HepG2 (cell line): ENCODE measurements at regions of chr2 and their contacts with region 1.

Region 1: DNA sequence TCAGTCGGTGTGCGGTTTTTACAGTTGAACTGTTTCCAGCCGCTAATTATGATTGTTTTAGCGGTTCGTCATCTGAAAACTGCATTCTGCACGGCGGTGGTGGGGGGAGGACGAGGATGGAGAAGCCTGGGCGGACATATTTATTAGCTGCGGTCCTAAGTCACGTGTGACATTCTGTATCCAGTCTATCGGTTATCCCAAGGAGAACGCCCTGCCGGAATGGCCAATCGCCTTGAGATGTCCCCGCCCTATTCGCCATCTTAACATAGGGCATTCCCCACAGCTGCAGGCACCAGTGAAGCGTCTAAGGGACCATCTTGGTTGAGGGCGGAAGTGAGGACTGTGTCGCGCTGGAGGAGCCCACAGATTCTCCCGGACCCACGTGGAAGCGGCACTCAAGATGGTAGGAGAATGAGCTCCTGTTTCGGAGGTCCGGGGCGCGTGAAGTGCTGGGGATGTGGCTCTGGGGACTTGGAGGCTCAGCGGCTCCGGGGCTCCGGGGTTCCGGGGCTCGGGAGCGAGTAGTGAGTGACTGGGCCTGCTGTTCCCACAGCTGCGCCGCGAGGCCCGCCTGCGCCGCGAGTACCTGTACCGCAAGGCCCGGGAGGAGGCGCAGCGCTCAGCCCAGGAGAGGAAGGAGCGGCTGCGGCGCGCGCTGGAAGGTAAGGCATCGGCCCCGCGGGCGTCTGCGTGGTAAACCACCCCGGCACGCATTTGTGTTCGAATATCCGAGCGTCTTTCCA is at the start of gene IMP4:
- DNase-seq: peak; percentile 100
- ATAC-seq: peak; percentile 93
- H3K4me3 ChIP-seq: peak within 1 kb of the TSS; percentile 78 to 99 (median 94)
- H3K27ac ChIP-seq: peak within 1 kb of the TSS; percentile 80
- H3K4me1 ChIP-seq: peaks cover 28% of the 10 kb centered on the region
- H3K27me3 ChIP-seq: peaks cover 0 to 4% of the 10 kb centered on the region in 2 experiments; a peak in 1 of 5 replicates
- CTCF ChIP-seq: peak; percentile 77
- EP300 ChIP-seq: 0 out of 4 replicates have a peak, but pooled peaks of 1 of the 2 experiments have one; percentile 24
- POLR2A ChIP-seq: peak; percentile 72 to 88
- RAD21 ChIP-seq: peak; percentile 84
- total RNA-seq, gene IMP4: 142 and 153 TPM in 2 replicates

Region 2: DNA sequence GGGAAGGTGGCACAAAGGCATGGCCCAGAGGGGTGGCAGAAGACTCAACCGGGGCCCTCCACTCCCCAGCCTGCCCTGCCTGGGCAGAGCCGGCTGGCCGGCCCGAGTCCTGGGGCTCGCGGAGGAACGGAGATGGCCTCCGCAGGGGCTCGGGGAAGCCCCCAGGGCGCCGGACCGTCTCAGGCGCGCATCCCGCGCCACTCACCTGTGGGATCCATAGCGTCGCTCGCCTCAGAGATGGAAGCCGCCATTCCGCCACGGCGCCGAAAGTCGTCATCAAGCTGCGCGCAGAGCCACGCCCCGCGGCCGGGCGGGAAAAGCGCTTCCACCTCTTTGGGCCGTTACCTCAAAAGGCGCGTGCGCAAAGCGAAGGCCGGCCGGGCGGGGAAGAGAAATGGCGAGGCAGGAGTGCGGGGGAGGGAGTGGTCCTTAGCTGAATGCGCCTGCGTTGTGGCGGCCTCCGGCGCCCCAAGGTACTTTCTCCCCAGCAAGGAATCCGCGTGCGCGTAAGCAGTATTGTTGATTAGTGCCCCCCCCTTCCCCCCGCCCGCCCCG is 161.3 kb before region 1 on chr2 and contains the start of gene SMPD4:
- CTCF ChIA-PET with region 1: no interaction called
- POLR2A ChIA-PET with region 1: interaction called, 32 read pairs
- in situ Hi-C with region 1: no loop called
- intact Hi-C with region 1: loop called (anchors 1 kb)
- DNase-seq: peak; percentile 96
- ATAC-seq: peak; percentile 73
- H3K4me3 ChIP-seq: peak within 1 kb of the TSS; percentile 97 to 99 (median 99)
- H3K27ac ChIP-seq: peak within 1 kb of the TSS; percentile 92
- H3K4me1 ChIP-seq: peaks cover 35% of the 10 kb centered on the region
- H3K27me3 ChIP-seq: peaks cover 0 to 4% of the 10 kb centered on the region in 2 experiments; a peak in 2 of 5 replicates
- CTCF ChIP-seq: no peak
- EP300 ChIP-seq: peak; percentile 23 to 50; a peak in 1 of 4 replicates
- POLR2A ChIP-seq: peak; percentile 68 to 71
- RAD21 ChIP-seq: no peak
- total RNA-seq, gene SMPD4: 70.5 and 72.5 TPM in 2 replicates

Region 3: DNA sequence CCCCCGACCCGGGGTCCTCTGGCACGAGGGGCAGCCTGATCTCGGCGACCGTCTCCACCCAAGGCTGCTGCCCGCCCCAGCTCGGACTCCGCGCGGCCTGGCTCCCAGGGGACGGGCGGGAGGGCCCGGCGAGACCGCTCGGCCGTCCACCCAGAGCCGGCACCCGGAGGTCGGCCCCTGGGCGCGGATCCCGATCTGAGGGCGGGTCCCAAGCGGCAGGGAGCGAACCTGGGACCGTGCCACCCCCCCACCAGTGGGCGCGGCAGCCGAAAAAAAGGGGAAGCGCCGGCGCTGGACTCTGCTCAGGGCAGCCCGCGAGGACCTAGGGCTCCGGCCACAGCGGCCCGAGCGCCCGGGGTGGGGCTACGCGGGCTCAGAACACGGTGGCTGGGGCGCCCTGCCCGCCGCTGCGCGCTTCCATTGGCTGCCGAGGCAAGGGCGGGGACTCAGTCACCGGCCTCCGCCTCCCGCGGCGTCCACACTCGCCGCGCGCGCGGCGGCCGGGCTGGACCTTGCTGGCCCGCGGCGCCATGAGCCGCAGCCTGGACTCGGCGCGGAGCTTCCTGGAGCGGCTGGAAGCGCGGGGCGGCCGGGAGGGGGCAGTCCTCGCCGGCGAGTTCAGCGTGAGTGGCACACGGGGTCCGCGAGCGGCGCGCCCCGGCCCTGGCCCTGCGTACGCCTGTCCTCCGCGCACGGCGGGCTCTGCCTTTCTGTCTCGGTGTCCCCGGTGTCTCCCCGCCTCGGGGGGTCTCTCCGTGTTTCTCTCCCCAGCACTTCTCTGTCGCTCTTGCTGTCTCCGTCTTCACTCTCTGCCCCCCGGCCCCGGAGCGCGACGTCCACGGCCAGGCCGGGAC is 13.1 kb after region 1 on chr2 and contains the start of gene PTPN18:
- CTCF ChIA-PET with region 1: no interaction called
- POLR2A ChIA-PET with region 1: interaction called, 120 read pairs
- in situ Hi-C with region 1: no loop called
- intact Hi-C with region 1: loop called (anchors 1 kb)
- DNase-seq: peak; percentile 87
- ATAC-seq: peak; percentile 95
- H3K4me3 ChIP-seq: peak within 1 kb of the TSS; percentile 74 to 97 (median 94)
- H3K27ac ChIP-seq: peak within 1 kb of the TSS; percentile 73
- H3K4me1 ChIP-seq: peaks cover 30% of the 10 kb centered on the region
- H3K27me3 ChIP-seq: no peaks in the 10 kb centered on the region; a peak in 1 of 5 replicates
- CTCF ChIP-seq: peak; percentile 72
- EP300 ChIP-seq: peak in 1 of 2 experiments; percentile 12; a peak in 1 of 4 replicates
- POLR2A ChIP-seq: peak; percentile 91 to 93
- RAD21 ChIP-seq: peak; percentile 82
- total RNA-seq, gene PTPN18: 10.8 and 14.8 TPM in 2 replicates

Region 4: DNA sequence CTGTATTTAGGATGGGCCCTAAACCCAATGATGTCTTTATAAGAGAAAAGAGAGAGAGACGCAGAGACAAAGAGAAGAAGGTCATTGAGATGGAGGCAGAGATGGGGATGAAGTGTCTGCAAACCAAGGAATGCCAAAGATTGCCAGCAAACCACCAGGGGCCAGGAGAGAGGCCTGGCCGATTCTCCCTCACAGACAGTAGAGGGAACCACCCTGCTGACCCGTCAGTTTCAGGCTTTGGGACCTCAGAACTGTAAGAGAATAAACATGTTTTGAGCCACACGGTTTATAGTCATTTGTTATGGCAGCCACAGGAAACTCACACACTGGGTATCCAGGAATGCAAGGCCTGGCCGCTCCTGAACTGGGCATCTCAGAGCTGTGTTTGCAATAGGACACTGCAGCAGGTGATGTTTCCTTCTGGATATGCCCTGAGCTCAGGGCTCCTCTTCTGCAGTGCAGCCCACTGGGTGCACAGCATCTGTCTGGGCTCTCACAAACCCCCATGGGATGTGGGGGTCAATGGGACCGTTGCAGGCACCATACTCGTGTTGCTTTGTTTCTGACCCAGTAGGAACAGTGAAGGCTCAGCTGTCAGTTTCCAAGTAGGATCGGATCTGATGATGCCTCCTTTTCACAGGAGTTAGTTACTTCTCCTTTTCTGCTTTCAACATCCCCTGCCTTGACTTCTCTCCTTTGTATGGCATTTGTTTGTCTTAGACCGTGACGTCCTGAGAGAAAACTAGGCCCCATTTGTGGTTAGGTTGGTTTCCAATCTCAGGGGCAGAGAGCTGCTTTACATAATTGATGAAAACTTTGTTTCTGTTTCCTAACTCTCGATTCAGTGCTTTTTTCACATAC is 34.0 kb after region 1 on chr2:
- CTCF ChIA-PET with region 1: no interaction called
- POLR2A ChIA-PET with region 1: no interaction called
- in situ Hi-C with region 1: no loop called
- intact Hi-C with region 1: no loop called
- DNase-seq: peak; percentile 26
- ATAC-seq: peak; percentile 82
- H3K4me3 ChIP-seq: no peak overlapping the region
- H3K27ac ChIP-seq: no peak overlapping the region
- H3K4me1 ChIP-seq: no peaks in the 10 kb centered on the region
- H3K27me3 ChIP-seq: peaks cover 4 to 15% of the 10 kb centered on the region in 2 experiments; a peak in 4 of 5 replicates
- CTCF ChIP-seq: peak; percentile 46
- EP300 ChIP-seq: no peak
- POLR2A ChIP-seq: no peak
- RAD21 ChIP-seq: no peak

Region 5: DNA sequence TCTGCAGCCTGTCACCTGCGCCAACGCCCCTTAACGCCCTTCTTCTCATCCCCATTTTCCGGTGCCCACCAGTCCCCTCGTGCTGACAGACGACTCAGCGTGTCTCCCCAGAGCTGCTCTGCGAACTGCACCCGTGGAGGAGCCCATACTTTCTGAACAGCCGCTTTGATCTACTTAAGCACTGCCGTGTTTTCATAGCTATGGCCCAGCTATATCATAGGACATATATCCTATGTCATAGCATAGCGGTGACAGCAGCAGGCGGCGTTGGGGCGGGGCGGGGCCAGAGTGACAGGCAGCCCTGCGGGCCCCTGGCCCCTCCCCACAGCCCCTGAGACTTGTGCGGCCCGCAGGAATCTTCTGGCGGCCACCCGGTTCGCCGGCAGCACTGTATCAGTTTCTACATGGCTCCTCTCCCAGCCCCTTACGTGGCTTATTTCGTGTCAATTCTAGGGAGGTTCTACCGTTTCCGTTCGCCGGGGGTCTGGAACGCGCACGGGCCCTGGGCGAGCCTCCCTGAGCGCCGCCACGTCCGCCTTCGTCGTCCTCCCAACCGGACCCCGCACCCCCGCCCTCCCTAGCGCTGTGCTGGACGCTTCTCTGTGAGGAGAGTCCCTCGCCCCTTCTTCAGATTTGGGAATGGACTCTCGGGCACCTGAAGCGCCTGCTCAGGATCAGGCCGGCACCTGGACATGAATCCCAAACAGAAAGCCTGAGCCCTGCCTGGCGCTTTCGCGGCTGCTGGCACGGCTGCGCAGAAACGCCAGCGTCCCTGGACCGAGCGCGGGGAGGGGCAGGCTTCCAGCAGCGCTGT is 48.6 kb after region 1 on chr2:
- CTCF ChIA-PET with region 1: no interaction called
- POLR2A ChIA-PET with region 1: interaction called, 13 read pairs
- in situ Hi-C with region 1: no loop called
- intact Hi-C with region 1: loop called (anchors 2 kb)
- DNase-seq: peak; percentile 55
- ATAC-seq: peak; percentile 93
- H3K4me3 ChIP-seq: peak overlapping the region; percentile 75 to 82 (median 78)
- H3K27ac ChIP-seq: peak overlapping the region; percentile 36
- H3K4me1 ChIP-seq: peaks cover 31% of the 10 kb centered on the region
- H3K27me3 ChIP-seq: peaks cover 2 to 13% of the 10 kb centered on the region in 2 experiments; a peak in 2 of 5 replicates
- CTCF ChIP-seq: no peak
- EP300 ChIP-seq: no peak
- POLR2A ChIP-seq: peak; percentile 39 to 79; a peak in 3 of 4 replicates
- RAD21 ChIP-seq: 0 out of 2 replicates have a peak, but pooled peaks have one; percentile 6

Region 6: DNA sequence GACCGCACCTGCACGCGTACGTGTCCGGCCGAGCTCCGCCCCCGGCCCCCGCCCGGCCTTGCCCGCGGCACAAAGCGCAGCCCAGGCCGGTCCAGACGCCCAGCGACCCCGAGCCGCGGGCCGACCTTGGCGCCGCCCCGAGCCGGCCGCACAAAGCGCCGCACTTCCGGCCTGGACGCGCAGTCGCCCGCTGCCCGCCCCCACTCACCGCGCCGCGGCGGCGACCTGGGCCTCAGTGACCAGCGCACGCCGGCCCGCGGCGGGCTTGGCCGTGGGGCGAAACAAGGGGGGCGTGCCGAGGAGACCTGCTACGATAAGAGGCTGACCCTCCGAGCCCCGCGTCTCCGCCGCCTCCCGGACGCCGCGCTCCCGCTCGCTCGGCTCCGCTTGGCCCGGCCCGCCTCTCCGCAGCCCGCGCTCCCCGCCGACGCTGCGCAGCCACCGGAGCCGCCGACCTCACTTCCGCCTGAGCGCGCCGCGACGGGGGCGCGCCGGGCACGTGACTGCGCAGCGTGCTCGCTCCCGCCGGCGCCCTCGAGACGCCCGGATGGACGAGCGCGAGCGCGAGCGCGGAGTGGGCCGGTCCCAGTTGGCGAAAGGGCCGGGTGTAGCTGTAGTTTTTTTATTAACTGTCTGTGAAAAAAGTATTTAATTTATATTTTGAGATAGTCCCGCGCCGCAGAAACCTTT is 750.4 kb after region 1 on chr2 and contains the start of gene FAM168B:
- CTCF ChIA-PET with region 1: no interaction called
- POLR2A ChIA-PET with region 1: interaction called, 4 read pairs
- in situ Hi-C with region 1: no loop called
- intact Hi-C with region 1: loop called (anchors 5 kb)
- DNase-seq: peak; percentile 82
- ATAC-seq: peak; percentile 90
- H3K4me3 ChIP-seq: peak within 1 kb of the TSS; percentile 68 to 90 (median 79)
- H3K27ac ChIP-seq: peak within 1 kb of the TSS; percentile 97
- H3K4me1 ChIP-seq: peaks cover 36% of the 10 kb centered on the region
- H3K27me3 ChIP-seq: no peaks in the 10 kb centered on the region; a peak in 1 of 5 replicates
- CTCF ChIP-seq: no peak
- EP300 ChIP-seq: peak; percentile 12 to 54; a peak in 1 of 4 replicates
- POLR2A ChIP-seq: peak; percentile 81 to 86
- RAD21 ChIP-seq: peak; percentile 87
- total RNA-seq, gene FAM168B: 63.7 and 64.5 TPM in 2 replicates